ENCODE measurements at regions of chr11 and their contacts with region 1.

Region 1: DNA sequence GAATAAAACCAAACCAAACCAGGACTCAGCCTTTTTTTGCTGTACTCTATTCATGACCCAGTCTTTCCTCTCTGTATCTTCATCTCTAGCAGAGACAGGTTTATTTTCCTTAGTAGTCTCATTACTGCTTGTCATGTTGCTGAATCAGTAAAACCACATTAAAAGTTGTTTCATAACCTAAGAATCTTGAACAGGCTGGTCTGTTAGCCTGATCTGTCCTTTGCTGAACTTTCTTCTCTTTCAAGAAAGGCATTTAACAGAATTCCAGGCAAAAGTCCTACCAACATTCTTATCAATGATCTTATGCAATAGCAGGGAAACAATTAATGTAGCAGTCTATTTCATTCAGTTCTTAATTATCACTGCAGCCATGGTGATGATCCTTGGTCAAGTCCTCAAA is 197.7 kb downstream of the CASP12 start:
- DNase-seq: peak in 2 of 9 experiments; percentile 8 to 40
- ATAC-seq: peak; percentile 60
- H3K4me3 ChIP-seq: no peak overlapping the region
- H3K4me3 Mint-ChIP-seq: no peak overlapping the region
- H3K27ac ChIP-seq: no peak overlapping the region
- H3K27ac Mint-ChIP-seq: peak overlapping the region; percentile 65
- H3K4me1 ChIP-seq: peaks cover 20% of the 10 kb centered on the region
- H3K4me1 Mint-ChIP-seq: peaks cover 34% of the 10 kb centered on the region
- H3K27me3 ChIP-seq: no peaks in the 10 kb centered on the region
- H3K27me3 Mint-ChIP-seq: no peaks in the 10 kb centered on the region
- CTCF ChIP-seq: no peak

Region 2: GRCh38 chr11:104668797-104669463 is 31.7 kb before region 1 on chr11:
- CTCF ChIA-PET with region 1: no interaction called
- POLR2A ChIA-PET with region 1: no interaction called
- intact Hi-C with region 1: loop called in 1 of 2 experiments (anchors 5 kb)
- DNase-seq: peak in 2 of 9 experiments; percentile 3 to 7
- ATAC-seq: peak; percentile 68
- H3K4me3 ChIP-seq: no peak overlapping the region
- H3K4me3 Mint-ChIP-seq: no peak overlapping the region
- H3K27ac ChIP-seq: no peak overlapping the region
- H3K27ac Mint-ChIP-seq: no peak overlapping the region
- H3K4me1 ChIP-seq: no peaks in the 10 kb centered on the region
- H3K4me1 Mint-ChIP-seq: peaks cover 7% of the 10 kb centered on the region
- H3K27me3 ChIP-seq: no peaks in the 10 kb centered on the region
- H3K27me3 Mint-ChIP-seq: no peaks in the 10 kb centered on the region
- CTCF ChIP-seq: no peak

Region 3: DNA sequence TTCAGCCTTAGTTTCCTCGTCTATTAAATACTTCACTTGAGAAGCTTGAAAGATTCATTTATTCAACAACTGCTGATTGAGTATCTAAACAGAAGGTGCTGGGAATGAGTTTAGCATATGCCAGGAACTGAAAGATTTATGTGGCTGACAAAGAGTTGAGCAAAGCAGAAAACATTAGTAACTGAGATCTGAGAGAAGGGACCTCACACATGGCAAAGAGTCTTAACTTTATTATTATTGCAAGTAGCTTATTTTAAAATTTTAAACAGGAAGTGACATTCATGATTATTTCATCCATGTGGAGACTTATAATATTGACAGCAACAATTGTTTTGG is 64.1 kb after region 1 on chr11:
- CTCF ChIA-PET with region 1: no interaction called
- POLR2A ChIA-PET with region 1: no interaction called
- intact Hi-C with region 1: loop called in 1 of 2 experiments (anchors 5 kb)
- DNase-seq: no peak
- ATAC-seq: no peak
- H3K4me3 ChIP-seq: no peak overlapping the region
- H3K4me3 Mint-ChIP-seq: no peak overlapping the region
- H3K27ac ChIP-seq: no peak overlapping the region
- H3K27ac Mint-ChIP-seq: peak overlapping the region; percentile 1
- H3K4me1 ChIP-seq: no peaks in the 10 kb centered on the region
- H3K4me1 Mint-ChIP-seq: peaks cover 8% of the 10 kb centered on the region
- H3K27me3 ChIP-seq: no peaks in the 10 kb centered on the region
- H3K27me3 Mint-ChIP-seq: no peaks in the 10 kb centered on the region
- CTCF ChIP-seq: no peak

Region 4: GRCh38 chr11:104852811-104853210 is 152.2 kb after region 1 on chr11:
- CTCF ChIA-PET with region 1: no interaction called
- POLR2A ChIA-PET with region 1: no interaction called
- intact Hi-C with region 1: no loop called
- DNase-seq: no peak
- ATAC-seq: no peak
- H3K4me3 ChIP-seq: no peak overlapping the region
- H3K4me3 Mint-ChIP-seq: no peak overlapping the region
- H3K27ac ChIP-seq: no peak overlapping the region
- H3K27ac Mint-ChIP-seq: no peak overlapping the region
- H3K4me1 ChIP-seq: no peaks in the 10 kb centered on the region
- H3K4me1 Mint-ChIP-seq: peaks cover 2% of the 10 kb centered on the region
- H3K27me3 ChIP-seq: no peaks in the 10 kb centered on the region
- H3K27me3 Mint-ChIP-seq: no peaks in the 10 kb centered on the region
- CTCF ChIP-seq: no peak

Region 5: DNA sequence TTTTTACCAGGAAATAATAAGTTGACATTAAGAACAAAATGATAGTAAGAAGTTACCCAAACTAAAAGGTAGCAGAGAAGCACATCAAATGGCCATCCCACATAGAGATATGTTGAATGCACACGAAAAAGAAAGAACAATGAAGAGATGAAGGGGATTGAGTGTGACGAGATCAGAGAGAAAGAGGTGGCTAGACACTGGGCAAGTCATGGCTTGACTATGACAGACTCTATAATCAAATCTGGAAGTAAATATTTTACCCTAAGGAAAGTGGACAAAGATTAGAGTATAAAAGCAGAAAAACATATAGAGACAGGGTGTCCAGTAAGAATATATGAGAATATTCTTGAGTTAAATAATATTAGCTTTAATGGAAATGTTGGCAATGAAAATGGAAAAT is 166.2 kb after region 1 on chr11:
- CTCF ChIA-PET with region 1: no interaction called
- POLR2A ChIA-PET with region 1: no interaction called
- intact Hi-C with region 1: no loop called
- DNase-seq: no peak
- ATAC-seq: no peak
- H3K4me3 ChIP-seq: no peak overlapping the region
- H3K4me3 Mint-ChIP-seq: no peak overlapping the region
- H3K27ac ChIP-seq: no peak overlapping the region
- H3K27ac Mint-ChIP-seq: no peak overlapping the region
- H3K4me1 ChIP-seq: no peaks in the 10 kb centered on the region
- H3K4me1 Mint-ChIP-seq: no peaks in the 10 kb centered on the region
- H3K27me3 ChIP-seq: no peaks in the 10 kb centered on the region
- H3K27me3 Mint-ChIP-seq: no peaks in the 10 kb centered on the region
- CTCF ChIP-seq: no peak